ENCODE measurements at regions of chr7 and their contacts with region 1.

Region 1: GRCh38 chr7:92245487-92246362 is at the starts of genes ANKIB1 and KRIT1:
- DNase-seq: peak; percentile 91 to 92
- H3K4me3 ChIP-seq: peak within 1 kb of the TSS; percentile 94
- H3K4me3 Mint-ChIP-seq: peak within 1 kb of the TSS; percentile 98
- H3K27ac Mint-ChIP-seq: peak within 1 kb of the TSS; percentile 99
- H3K4me1 ChIP-seq: peaks cover 16% of the 10 kb centered on the region
- H3K4me1 Mint-ChIP-seq: peaks cover 13% of the 10 kb centered on the region
- H3K27me3 ChIP-seq: no peaks in the 10 kb centered on the region
- H3K27me3 Mint-ChIP-seq: no peaks in the 10 kb centered on the region
- CTCF ChIP-seq: peak; percentile 1 to 31
- total RNA-seq, gene ANKIB1: 56.6 and 57.2 TPM in 2 replicates
- total RNA-seq, gene KRIT1: 50.3 and 54.4 TPM in 2 replicates

Region 2: DNA sequence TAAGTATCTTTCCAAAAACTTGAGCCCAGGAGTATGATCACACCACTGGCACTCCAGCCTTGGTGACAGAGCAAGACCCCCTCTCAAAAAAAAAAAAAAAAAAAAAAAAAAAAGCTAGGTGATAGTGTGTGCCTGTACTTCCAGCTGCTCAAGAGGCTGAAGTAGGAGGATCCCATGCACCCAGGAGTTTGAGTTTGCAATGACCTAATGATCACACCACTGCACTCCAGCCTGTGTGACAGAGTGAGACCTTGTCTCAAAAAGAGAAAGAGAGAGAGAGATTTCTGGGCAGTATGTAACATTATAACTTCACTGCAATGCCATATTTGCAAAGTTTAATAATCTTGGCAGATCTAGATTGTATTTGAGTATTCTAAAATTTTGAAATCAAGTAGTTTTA is 257.5 kb before region 1 on chr7:
- CTCF ChIA-PET with region 1: no interaction called
- POLR2A ChIA-PET with region 1: no interaction called
- intact Hi-C with region 1: loop called (anchors 10 kb)
- DNase-seq: no peak
- H3K4me3 ChIP-seq: no peak overlapping the region
- H3K4me3 Mint-ChIP-seq: no peak overlapping the region
- H3K27ac Mint-ChIP-seq: no peak overlapping the region
- H3K4me1 ChIP-seq: peaks cover 4% of the 10 kb centered on the region; the same call in 1 of the 2 replicates
- H3K4me1 Mint-ChIP-seq: peaks cover 7% of the 10 kb centered on the region
- H3K27me3 ChIP-seq: no peaks in the 10 kb centered on the region
- H3K27me3 Mint-ChIP-seq: no peaks in the 10 kb centered on the region
- CTCF ChIP-seq: no peak

Region 3: GRCh38 chr7:92002720-92003119 is 243.0 kb before region 1 on chr7:
- CTCF ChIA-PET with region 1: no interaction called
- POLR2A ChIA-PET with region 1: no interaction called
- intact Hi-C with region 1: no loop called
- DNase-seq: no peak
- H3K4me3 ChIP-seq: no peak overlapping the region
- H3K4me3 Mint-ChIP-seq: no peak overlapping the region
- H3K27ac Mint-ChIP-seq: no peak overlapping the region
- H3K4me1 ChIP-seq: no peaks in the 10 kb centered on the region
- H3K4me1 Mint-ChIP-seq: no peaks in the 10 kb centered on the region
- H3K27me3 ChIP-seq: no peaks in the 10 kb centered on the region
- H3K27me3 Mint-ChIP-seq: no peaks in the 10 kb centered on the region
- CTCF ChIP-seq: no peak

Region 4: GRCh38 chr7:92330835-92331438 is 85.2 kb after region 1 on chr7:
- CTCF ChIA-PET with region 1: no interaction called
- POLR2A ChIA-PET with region 1: no interaction called
- intact Hi-C with region 1: loop called (anchors 5 kb)
- DNase-seq: no peak
- H3K4me3 ChIP-seq: no peak overlapping the region
- H3K4me3 Mint-ChIP-seq: no peak overlapping the region
- H3K27ac Mint-ChIP-seq: no peak overlapping the region
- H3K4me1 ChIP-seq: no peaks in the 10 kb centered on the region
- H3K4me1 Mint-ChIP-seq: peaks cover 5% of the 10 kb centered on the region
- H3K27me3 ChIP-seq: no peaks in the 10 kb centered on the region
- H3K27me3 Mint-ChIP-seq: no peaks in the 10 kb centered on the region
- CTCF ChIP-seq: no peak